Naive thymus-derived CD4-positive, alpha-beta T cell (primary cell): ENCODE measurements at regions of chr3 and their contacts with region 1.

Region 1: DNA sequence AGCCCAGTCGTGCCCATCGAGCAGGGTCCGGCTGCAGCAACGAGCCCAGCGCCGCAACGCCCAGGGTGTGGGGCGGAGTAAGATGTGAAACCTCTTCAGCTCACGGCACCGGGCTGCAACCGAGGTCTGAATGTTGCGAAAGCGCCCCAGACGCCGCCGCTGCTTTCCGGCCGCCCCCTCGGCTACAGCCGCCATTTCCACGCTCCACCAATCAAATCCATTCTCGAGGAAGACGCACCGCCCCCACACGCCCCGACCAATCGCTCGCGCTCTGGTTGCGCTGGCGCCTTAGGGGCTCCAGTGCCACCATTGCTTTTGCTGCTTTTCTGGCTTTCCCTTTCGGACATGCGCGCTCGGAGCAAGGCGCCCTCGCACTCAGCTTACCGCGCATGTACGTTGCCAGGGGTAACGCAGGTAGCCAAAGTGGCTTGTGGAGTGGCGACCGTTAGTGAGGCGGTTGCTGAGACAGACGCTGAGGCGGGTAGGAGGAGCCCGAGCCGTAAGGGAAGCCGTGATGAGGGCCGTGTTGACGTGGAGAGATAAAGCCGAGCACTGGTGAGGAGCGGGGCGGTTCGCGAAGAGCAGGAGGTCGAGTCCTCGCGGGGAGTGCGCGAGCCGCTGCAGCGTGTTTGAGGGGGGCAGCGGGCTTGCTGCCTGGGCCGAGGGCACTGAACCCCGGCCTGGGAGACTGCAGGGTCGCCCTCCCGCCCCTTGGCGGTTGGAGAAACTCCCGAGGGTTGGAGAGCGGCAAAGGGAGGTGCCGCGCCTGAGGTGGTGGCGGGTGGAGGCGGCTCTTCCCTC is at the starts of genes IFT122 and MBD4:
- DNase-seq: peak; percentile 95 to 100 (median 99)
- ATAC-seq: peak; percentile 91
- H3K4me3 ChIP-seq: peak within 1 kb of the TSS; percentile 99
- H3K4me3 Mint-ChIP-seq: peak within 1 kb of the TSS; percentile 85 to 98 (median 94)
- H3K27ac ChIP-seq: peak within 1 kb of the TSS; percentile 95
- H3K27ac Mint-ChIP-seq: peak within 1 kb of the TSS; percentile 93 to 99 (median 97)
- H3K4me1 ChIP-seq: peaks cover 19 to 38% of the 10 kb centered on the region in 2 donors
- H3K4me1 Mint-ChIP-seq: peaks cover 52 to 88% (median 73%) of the 10 kb centered on the region in 7 donors
- H3K27me3 ChIP-seq: no peaks in the 10 kb centered on the region
- H3K27me3 Mint-ChIP-seq: no peaks in the 10 kb centered on the region
- total RNA-seq, gene IFT122: 16.6 to 25.2 (median 18.8) TPM
- total RNA-seq, gene MBD4: 37.9 to 56.6 (median 53.1) TPM

Region 2: GRCh38 chr3:128051837-128052594 is 1388.0 kb before region 1 on chr3 and contains the start of gene SEC61A1:
- CTCF ChIA-PET with region 1: no interaction called
- POLR2A ChIA-PET with region 1: no interaction called
- intact Hi-C with region 1: loop called in 1 of 2 experiments (anchors 1 kb)
- DNase-seq: peak; percentile 94 to 97 (median 95)
- ATAC-seq: peak; percentile 97
- H3K4me3 ChIP-seq: peak within 1 kb of the TSS; percentile 82
- H3K4me3 Mint-ChIP-seq: peak within 1 kb of the TSS; percentile 90 to 98 (median 96)
- H3K27ac ChIP-seq: peak within 1 kb of the TSS; percentile 95
- H3K27ac Mint-ChIP-seq: peak within 1 kb of the TSS; percentile 87 to 99 (median 97)
- H3K4me1 ChIP-seq: peaks cover 28 to 37% of the 10 kb centered on the region in 2 donors
- H3K4me1 Mint-ChIP-seq: peaks cover 36 to 44% (median 43%) of the 10 kb centered on the region in 7 donors
- H3K27me3 ChIP-seq: no peaks in the 10 kb centered on the region
- H3K27me3 Mint-ChIP-seq: peaks cover 0 to 17% (median 1%) of the 10 kb centered on the region in 5 donors
- total RNA-seq, gene SEC61A1: 110 to 219 (median 132) TPM

Region 3: DNA sequence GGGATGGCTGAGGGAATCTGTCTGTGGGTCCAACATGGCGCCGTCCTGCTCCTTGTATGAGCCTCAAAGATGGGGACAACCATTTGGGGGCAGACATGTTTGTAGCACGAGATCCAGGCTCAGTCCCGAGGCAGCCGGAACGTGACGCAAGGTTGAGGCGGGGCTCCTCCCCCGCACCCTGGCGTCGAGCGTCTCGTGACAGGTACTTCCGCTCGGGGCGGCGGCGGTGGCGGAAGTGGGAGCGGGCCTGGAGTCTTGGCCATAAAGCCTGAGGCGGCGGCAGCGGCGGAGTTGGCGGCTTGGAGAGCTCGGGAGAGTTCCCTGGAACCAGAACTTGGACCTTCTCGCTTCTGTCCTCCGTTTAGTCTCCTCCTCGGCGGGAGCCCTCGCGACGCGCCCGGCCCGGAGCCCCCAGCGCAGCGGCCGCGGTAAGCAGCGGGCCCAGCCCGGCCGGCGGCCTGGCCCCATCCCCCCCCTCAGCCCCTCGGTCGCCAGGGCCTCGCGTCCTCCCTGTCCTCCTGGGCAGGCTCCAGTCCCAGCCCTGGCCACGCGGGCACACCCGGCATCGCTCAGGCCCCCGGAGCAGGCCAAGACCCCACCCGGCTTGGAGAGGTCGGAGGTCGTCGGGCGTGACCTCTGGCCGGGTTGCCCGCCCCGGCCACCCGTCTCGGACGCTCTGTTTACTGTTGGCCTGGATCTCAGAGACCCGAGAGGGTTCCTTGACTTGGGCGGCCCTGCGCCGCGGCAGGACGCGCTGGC is 713.9 kb before region 1 on chr3 and contains the start of gene RAB7A:
- CTCF ChIA-PET with region 1: interaction called, 4 read pairs
- POLR2A ChIA-PET with region 1: no interaction called
- intact Hi-C with region 1: loop called in 1 of 2 experiments (anchors 1 kb)
- DNase-seq: peak; percentile 92 to 97 (median 97)
- ATAC-seq: peak; percentile 98
- H3K4me3 ChIP-seq: peak within 1 kb of the TSS; percentile 57
- H3K4me3 Mint-ChIP-seq: peak within 1 kb of the TSS; percentile 89 to 98 (median 96)
- H3K27ac ChIP-seq: peak within 1 kb of the TSS; percentile 100
- H3K27ac Mint-ChIP-seq: peak within 1 kb of the TSS; percentile 92 to 98 (median 95)
- H3K4me1 ChIP-seq: peaks cover 32 to 38% of the 10 kb centered on the region in 2 donors
- H3K4me1 Mint-ChIP-seq: peaks cover 49 to 64% (median 60%) of the 10 kb centered on the region in 7 donors
- H3K27me3 ChIP-seq: no peaks in the 10 kb centered on the region
- H3K27me3 Mint-ChIP-seq: peaks cover 0 to 3% (median 0%) of the 10 kb centered on the region in 5 donors
- total RNA-seq, gene RAB7A: 124 to 249 (median 172) TPM

Region 4: GRCh38 chr3:129278439-129278970 is 161.5 kb before region 1 on chr3 and contains the start of gene HMCES:
- CTCF ChIA-PET with region 1: no interaction called
- POLR2A ChIA-PET with region 1: interaction called, 7 read pairs
- intact Hi-C with region 1: loop called (anchors 1 kb)
- DNase-seq: peak; percentile 92 to 98 (median 95)
- ATAC-seq: peak; percentile 98
- H3K4me3 ChIP-seq: peak within 1 kb of the TSS; percentile 99
- H3K4me3 Mint-ChIP-seq: peak within 1 kb of the TSS; percentile 95 to 99 (median 98)
- H3K27ac ChIP-seq: peak within 1 kb of the TSS; percentile 99
- H3K27ac Mint-ChIP-seq: peak within 1 kb of the TSS; percentile 89 to 100 (median 98)
- H3K4me1 ChIP-seq: peaks cover 14 to 29% of the 10 kb centered on the region in 2 donors
- H3K4me1 Mint-ChIP-seq: peaks cover 21 to 50% (median 37%) of the 10 kb centered on the region in 7 donors
- H3K27me3 ChIP-seq: no peaks in the 10 kb centered on the region
- H3K27me3 Mint-ChIP-seq: no peaks in the 10 kb centered on the region
- total RNA-seq, gene HMCES: 45.7 to 56.4 (median 52.5) TPM

Region 5: DNA sequence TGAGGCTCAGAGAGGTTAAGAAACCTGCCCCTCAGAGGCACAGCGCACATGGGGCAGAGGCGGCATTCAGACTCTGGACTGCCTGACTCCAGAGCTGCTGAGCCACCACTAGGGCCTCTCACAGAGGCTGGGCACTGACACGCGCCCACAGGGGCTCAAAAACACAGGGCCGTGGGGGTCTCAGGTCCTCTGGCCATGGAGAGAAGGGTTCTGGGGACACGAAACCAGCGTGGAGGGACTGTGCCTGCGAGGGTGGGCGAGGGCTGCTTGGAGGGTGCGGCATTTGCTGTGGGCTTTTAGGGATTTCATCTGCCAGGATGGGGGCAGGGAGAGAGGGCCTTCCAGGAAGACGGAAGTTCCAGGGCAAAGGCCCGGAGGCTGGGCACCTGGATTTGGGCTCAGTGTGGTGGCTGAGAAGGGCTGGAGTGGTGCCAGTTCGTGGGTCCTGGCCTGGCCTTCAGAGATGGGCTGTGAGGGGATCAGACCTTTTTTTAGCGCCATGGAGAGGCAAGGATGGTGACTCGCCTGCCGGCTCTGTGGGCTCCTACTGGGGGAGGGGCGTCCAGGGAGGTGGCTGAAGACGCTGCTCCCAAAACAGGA is 81.1 kb before region 1 on chr3:
- CTCF ChIA-PET with region 1: no interaction called
- POLR2A ChIA-PET with region 1: no interaction called
- intact Hi-C with region 1: no loop called
- DNase-seq: no peak
- ATAC-seq: no peak
- H3K4me3 ChIP-seq: no peak overlapping the region
- H3K4me3 Mint-ChIP-seq: no peak overlapping the region
- H3K27ac ChIP-seq: no peak overlapping the region
- H3K27ac Mint-ChIP-seq: no peak overlapping the region
- H3K4me1 ChIP-seq: no peaks in the 10 kb centered on the region
- H3K4me1 Mint-ChIP-seq: no peaks in the 10 kb centered on the region
- H3K27me3 ChIP-seq: no peaks in the 10 kb centered on the region
- H3K27me3 Mint-ChIP-seq: no peaks in the 10 kb centered on the region

Region 6: DNA sequence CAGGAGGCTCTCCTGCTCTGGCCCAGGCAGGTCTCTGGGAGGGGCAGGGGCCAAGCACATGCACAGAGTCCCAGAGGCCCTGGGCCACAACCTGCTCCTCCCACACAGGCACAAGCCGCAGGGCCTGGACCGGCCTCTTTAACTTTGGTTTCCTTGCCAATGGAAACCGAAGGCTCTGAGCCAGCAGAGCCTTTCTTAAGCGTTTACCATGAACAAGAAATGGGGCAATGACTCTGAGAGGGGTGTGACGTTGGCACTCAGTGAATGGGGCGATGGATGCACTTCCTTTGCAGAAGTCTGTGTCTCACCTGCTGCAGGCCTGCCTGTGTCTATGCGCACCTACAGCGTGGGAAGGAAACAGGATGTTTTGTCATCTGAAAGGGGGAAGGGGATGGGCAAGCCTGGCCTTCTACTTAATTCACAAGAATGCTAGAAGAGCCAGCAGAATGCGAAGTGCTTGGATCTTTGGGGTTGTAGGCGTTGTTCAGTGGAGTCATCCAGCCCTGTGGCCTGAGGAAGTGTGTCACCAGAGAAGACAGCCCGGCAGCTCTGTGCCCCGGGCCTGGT is 41.8 kb after region 1 on chr3:
- CTCF ChIA-PET with region 1: no interaction called
- POLR2A ChIA-PET with region 1: interaction called, 4 read pairs
- intact Hi-C with region 1: loop called in 1 of 2 experiments (anchors 1 kb)
- DNase-seq: peak in 8 of 9 donors; percentile 11 to 89 (median 84)
- ATAC-seq: peak; percentile 93
- H3K4me3 ChIP-seq: no peak overlapping the region
- H3K4me3 Mint-ChIP-seq: peak overlapping the region in 9 of 10 donors; percentile 3 to 66 (median 61)
- H3K27ac ChIP-seq: peak overlapping the region; percentile 67
- H3K27ac Mint-ChIP-seq: peak overlapping the region; percentile 84 to 99 (median 95)
- H3K4me1 ChIP-seq: peaks cover 0 to 12% of the 10 kb centered on the region in 2 donors
- H3K4me1 Mint-ChIP-seq: peaks cover 9 to 28% (median 10%) of the 10 kb centered on the region in 7 donors
- H3K27me3 ChIP-seq: no peaks in the 10 kb centered on the region
- H3K27me3 Mint-ChIP-seq: no peaks in the 10 kb centered on the region

Region 7: GRCh38 chr3:129893581-129894070 is 453.6 kb after region 1 on chr3 and contains the start of gene TMCC1:
- CTCF ChIA-PET with region 1: no interaction called
- POLR2A ChIA-PET with region 1: interaction called, 5 read pairs
- intact Hi-C with region 1: loop called (anchors 1 kb)
- DNase-seq: peak; percentile 89 to 95 (median 93)
- ATAC-seq: peak; percentile 97
- H3K4me3 ChIP-seq: peak within 1 kb of the TSS; percentile 80
- H3K4me3 Mint-ChIP-seq: peak within 1 kb of the TSS; percentile 85 to 95 (median 94)
- H3K27ac ChIP-seq: peak within 1 kb of the TSS; percentile 94
- H3K27ac Mint-ChIP-seq: peak within 1 kb of the TSS; percentile 77 to 97 (median 92)
- H3K4me1 ChIP-seq: peaks cover 18 to 32% of the 10 kb centered on the region in 2 donors
- H3K4me1 Mint-ChIP-seq: peaks cover 32 to 50% (median 46%) of the 10 kb centered on the region in 7 donors
- H3K27me3 ChIP-seq: no peaks in the 10 kb centered on the region
- H3K27me3 Mint-ChIP-seq: peaks cover 0 to 3% (median 0%) of the 10 kb centered on the region in 5 donors
- total RNA-seq, gene TMCC1: 20.5 to 39.4 (median 36.5) TPM